ENCODE measurements at regions of chr2 and their contacts with region 1.

Region 1: GRCh38 chr2:231706731-231707624 is 1.3 kb upstream of the PTMA start:
- DNase-seq: peak; percentile 93 to 99 (median 97)
- ATAC-seq: peak; percentile 50
- H3K4me3 ChIP-seq: peak overlapping the region; percentile 85 to 92
- H3K4me3 Mint-ChIP-seq: peak overlapping the region; percentile 98
- H3K27ac ChIP-seq: peak overlapping the region; percentile 95 to 97
- H3K27ac Mint-ChIP-seq: peak overlapping the region; percentile 100
- H3K4me1 ChIP-seq: peaks cover 25% of the 10 kb centered on the region
- H3K4me1 Mint-ChIP-seq: peaks cover 31% of the 10 kb centered on the region
- H3K27me3 ChIP-seq: no peaks in the 10 kb centered on the region
- H3K27me3 Mint-ChIP-seq: no peaks in the 10 kb centered on the region
- CTCF ChIP-seq: peak; percentile 83

Region 2: GRCh38 chr2:231463698-231464575 is 243.0 kb before region 1 on chr2 and contains the start of gene NCL:
- CTCF ChIA-PET with region 1: interaction called, 9 read pairs
- POLR2A ChIA-PET with region 1: interaction called, 30 read pairs
- intact Hi-C with region 1: loop called in 1 of 2 experiments (anchors 2 kb)
- DNase-seq: peak; percentile 71 to 94 (median 82)
- ATAC-seq: peak; percentile 62
- H3K4me3 ChIP-seq: peak within 1 kb of the TSS; percentile 97
- H3K4me3 Mint-ChIP-seq: peak within 1 kb of the TSS; percentile 96
- H3K27ac ChIP-seq: peak within 1 kb of the TSS; percentile 97 to 98
- H3K27ac Mint-ChIP-seq: peak within 1 kb of the TSS; percentile 100
- H3K4me1 ChIP-seq: peaks cover 36% of the 10 kb centered on the region
- H3K4me1 Mint-ChIP-seq: peaks cover 52% of the 10 kb centered on the region
- H3K27me3 ChIP-seq: no peaks in the 10 kb centered on the region
- H3K27me3 Mint-ChIP-seq: no peaks in the 10 kb centered on the region
- CTCF ChIP-seq: no peak
- total RNA-seq, gene NCL: 390 to 394 TPM

Region 3: DNA sequence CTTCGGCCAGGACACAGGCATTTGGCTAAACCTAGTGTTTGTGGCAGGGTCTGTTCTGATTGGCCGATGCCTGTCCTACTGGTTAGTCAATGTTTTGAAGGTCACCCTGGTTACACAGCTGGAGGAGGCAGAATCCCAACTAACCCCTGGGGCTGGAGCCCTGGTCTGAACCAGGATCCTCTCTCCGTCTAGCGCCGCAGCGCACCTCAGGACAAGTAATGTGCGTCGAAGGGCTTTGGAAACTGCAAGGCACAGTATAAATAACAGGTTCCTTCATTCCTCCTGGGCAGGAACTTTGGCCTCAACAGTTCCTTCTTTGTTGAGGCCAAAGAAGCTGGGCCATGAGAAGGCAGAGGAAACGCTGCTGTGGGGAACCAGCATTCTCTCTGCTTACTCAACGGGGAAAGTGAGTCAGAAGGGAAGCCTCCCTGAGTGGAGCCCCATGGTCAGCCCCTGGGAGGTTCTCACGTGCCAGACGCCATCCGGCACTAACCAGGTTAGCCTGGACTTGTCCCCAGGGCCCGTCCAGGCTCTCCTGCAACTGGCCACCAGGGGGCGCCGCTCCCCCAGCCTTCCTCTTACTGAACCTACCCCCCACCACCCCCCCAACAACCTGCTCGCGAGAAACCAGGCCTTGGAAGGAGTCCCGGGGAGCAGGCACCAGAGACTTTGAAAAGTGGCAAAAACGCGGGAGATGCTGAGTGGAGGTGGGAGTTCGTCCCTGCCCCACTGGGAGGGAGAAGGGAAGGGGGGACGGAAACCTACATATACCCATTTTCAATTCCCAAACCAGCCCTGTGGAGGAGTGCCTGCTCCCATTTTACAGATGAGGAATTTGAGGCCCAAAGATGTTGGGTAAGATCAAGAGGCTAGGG is 94.6 kb before region 1 on chr2:
- CTCF ChIA-PET with region 1: interaction called, 160 read pairs
- POLR2A ChIA-PET with region 1: interaction called, 38 read pairs
- intact Hi-C with region 1: no loop called
- DNase-seq: peak; percentile 73 to 92 (median 88)
- ATAC-seq: peak; percentile 78
- H3K4me3 ChIP-seq: peak overlapping the region in 1 of 2 experiments; percentile 55
- H3K4me3 Mint-ChIP-seq: peak overlapping the region; percentile 88
- H3K27ac ChIP-seq: peak overlapping the region in 1 of 2 experiments; percentile 17
- H3K27ac Mint-ChIP-seq: peak overlapping the region; percentile 42
- H3K4me1 ChIP-seq: peaks cover 16% of the 10 kb centered on the region
- H3K4me1 Mint-ChIP-seq: peaks cover 23% of the 10 kb centered on the region
- H3K27me3 ChIP-seq: peaks cover 0 to 5% of the 10 kb centered on the region in 2 experiments
- H3K27me3 Mint-ChIP-seq: no peaks in the 10 kb centered on the region
- CTCF ChIP-seq: peak; percentile 82

Region 4: DNA sequence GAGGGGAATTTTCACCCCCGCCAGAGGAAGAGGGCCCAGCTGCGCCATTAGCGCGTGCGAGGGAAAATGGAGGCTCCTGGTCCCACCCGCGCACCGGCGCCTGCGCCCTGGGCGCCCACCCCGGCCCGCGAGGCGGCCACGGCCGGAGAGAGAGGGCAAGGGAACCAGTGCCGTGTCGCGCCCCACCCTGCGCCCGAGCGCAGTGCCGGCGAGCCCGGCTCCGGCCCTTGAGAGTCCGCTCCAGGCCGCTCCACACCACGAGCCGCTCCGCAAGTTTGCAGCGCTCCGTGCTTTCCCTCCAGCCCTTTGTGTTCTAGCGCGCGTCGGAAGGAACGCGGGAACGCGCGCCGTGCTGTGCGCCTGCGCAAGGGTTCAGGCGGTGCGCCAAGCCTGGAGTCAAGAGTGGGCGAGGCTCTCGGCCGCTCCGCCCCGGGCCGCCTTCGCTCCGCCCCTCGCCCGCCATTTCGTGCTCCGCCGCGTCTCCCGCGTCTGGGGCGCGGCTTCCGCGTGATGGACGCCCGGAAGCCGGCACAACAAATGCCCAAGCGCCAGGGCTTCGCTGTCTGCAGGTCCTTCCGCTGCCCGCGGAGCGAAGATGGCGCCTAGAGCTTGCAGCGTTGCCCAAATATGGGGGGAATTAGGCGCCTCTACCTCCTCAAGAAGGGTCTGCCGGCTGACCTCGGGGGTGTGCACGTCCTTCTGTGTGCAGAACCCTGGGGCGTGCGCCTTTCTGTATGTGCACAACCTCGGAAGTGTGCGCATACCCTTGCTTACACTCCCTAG is 44.8 kb before region 1 on chr2:
- CTCF ChIA-PET with region 1: interaction called, 70 read pairs
- POLR2A ChIA-PET with region 1: interaction called, 129 read pairs
- intact Hi-C with region 1: loop called in 1 of 2 experiments (anchors 1 kb)
- DNase-seq: peak; percentile 94 to 99 (median 96)
- ATAC-seq: peak; percentile 91
- H3K4me3 ChIP-seq: peak overlapping the region; percentile 60 to 82
- H3K4me3 Mint-ChIP-seq: peak overlapping the region; percentile 77
- H3K27ac ChIP-seq: peak overlapping the region; percentile 87 to 94
- H3K27ac Mint-ChIP-seq: peak overlapping the region; percentile 97
- H3K4me1 ChIP-seq: peaks cover 16% of the 10 kb centered on the region
- H3K4me1 Mint-ChIP-seq: peaks cover 14% of the 10 kb centered on the region
- H3K27me3 ChIP-seq: no peaks in the 10 kb centered on the region
- H3K27me3 Mint-ChIP-seq: no peaks in the 10 kb centered on the region
- CTCF ChIP-seq: no peak

Region 5: GRCh38 chr2:231720987-231721966 is 14.3 kb after region 1 on chr2:
- CTCF ChIA-PET with region 1: interaction called, 134 read pairs
- POLR2A ChIA-PET with region 1: interaction called, 8 read pairs
- intact Hi-C with region 1: no loop called
- DNase-seq: peak in 1 of 9 experiments; percentile 23
- ATAC-seq: no peak
- H3K4me3 ChIP-seq: no peak overlapping the region
- H3K4me3 Mint-ChIP-seq: no peak overlapping the region
- H3K27ac ChIP-seq: no peak overlapping the region
- H3K27ac Mint-ChIP-seq: no peak overlapping the region
- H3K4me1 ChIP-seq: no peaks in the 10 kb centered on the region
- H3K4me1 Mint-ChIP-seq: no peaks in the 10 kb centered on the region
- H3K27me3 ChIP-seq: no peaks in the 10 kb centered on the region
- H3K27me3 Mint-ChIP-seq: no peaks in the 10 kb centered on the region
- CTCF ChIP-seq: no peak

Region 6: GRCh38 chr2:231786177-231786916 is 79.4 kb after region 1 on chr2 and contains the start of gene COPS7B:
- CTCF ChIA-PET with region 1: no interaction called
- POLR2A ChIA-PET with region 1: interaction called, 3 read pairs
- intact Hi-C with region 1: loop called (anchors 1 to 2 kb)
- DNase-seq: peak; percentile 57 to 88 (median 81)
- ATAC-seq: peak; percentile 64
- H3K4me3 ChIP-seq: peak within 1 kb of the TSS; percentile 75 to 95
- H3K4me3 Mint-ChIP-seq: peak within 1 kb of the TSS; percentile 93
- H3K27ac ChIP-seq: peak within 1 kb of the TSS; percentile 59 to 73
- H3K27ac Mint-ChIP-seq: peak within 1 kb of the TSS; percentile 84
- H3K4me1 ChIP-seq: peaks cover 48% of the 10 kb centered on the region
- H3K4me1 Mint-ChIP-seq: peaks cover 76% of the 10 kb centered on the region
- H3K27me3 ChIP-seq: no peaks in the 10 kb centered on the region
- H3K27me3 Mint-ChIP-seq: no peaks in the 10 kb centered on the region
- CTCF ChIP-seq: peak; percentile 66
- total RNA-seq, gene COPS7B: 35.0 to 36.8 TPM

Region 7: DNA sequence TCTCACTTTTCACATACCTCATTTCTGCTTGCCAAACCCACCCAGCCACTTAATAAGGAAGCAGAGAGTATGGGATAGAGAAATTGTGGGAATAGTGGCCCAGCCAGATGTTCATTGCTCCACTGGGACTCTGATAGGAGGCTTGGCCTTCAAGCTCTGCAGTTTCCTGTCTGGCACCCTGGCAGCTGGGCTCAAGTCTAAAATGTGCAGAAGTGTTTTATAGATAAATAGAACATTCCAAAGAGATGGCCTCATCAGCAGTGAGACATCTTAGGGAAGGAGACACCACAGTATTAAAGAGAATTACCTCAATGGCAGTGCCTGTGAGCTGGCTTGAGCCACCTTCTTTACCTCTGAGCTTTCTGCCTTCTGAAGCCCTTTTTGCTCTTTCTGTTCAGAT is 103.9 kb after region 1 on chr2:
- CTCF ChIA-PET with region 1: no interaction called
- POLR2A ChIA-PET with region 1: no interaction called
- intact Hi-C with region 1: no loop called
- DNase-seq: no peak
- ATAC-seq: no peak
- H3K4me3 ChIP-seq: no peak overlapping the region
- H3K4me3 Mint-ChIP-seq: no peak overlapping the region
- H3K27ac ChIP-seq: no peak overlapping the region
- H3K27ac Mint-ChIP-seq: no peak overlapping the region
- H3K4me1 ChIP-seq: no peaks in the 10 kb centered on the region
- H3K4me1 Mint-ChIP-seq: no peaks in the 10 kb centered on the region
- H3K27me3 ChIP-seq: no peaks in the 10 kb centered on the region
- H3K27me3 Mint-ChIP-seq: no peaks in the 10 kb centered on the region
- CTCF ChIP-seq: no peak